Dorsolateral prefrontal cortex (tissue), 120 donors: ENCODE measurements at regions of chr5 and their contacts with region 1.

Region 1: GRCh38 chr5:138128334-138128733 is 10.9 kb downstream of the NME5 start:
- DNase-seq: no peak
- H3K4me3 ChIP-seq: no peak overlapping the region
- H3K27ac ChIP-seq: no peak overlapping the region
- H3K27me3 ChIP-seq: no peaks in the 10 kb centered on the region
- CTCF ChIP-seq: no peak

Region 2: DNA sequence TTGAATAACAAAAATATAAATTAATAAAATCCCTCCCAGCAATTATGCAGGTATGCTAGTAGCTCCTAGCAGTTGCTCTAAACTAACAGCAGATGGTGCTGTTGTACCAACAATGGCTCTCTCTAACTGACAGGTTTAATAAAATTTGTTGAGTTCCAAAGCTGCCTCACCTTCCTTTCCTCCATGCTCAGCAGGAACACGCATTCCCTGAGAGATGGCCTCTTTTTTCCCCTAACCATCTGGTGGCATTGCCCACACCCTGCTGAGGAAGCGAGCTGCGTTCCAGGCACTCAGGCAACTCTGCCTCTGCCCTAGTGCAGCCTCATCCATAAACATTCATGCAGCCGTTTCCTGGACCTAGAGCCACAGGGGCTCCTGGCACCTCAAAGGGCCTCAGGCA is 498.7 kb before region 1 on chr5:
- intact Hi-C with region 1: loop called (anchors 5 to 10 kb)
- DNase-seq: peak in 3 of 10 donors; percentile 27 to 87 (median 47)
- H3K4me3 ChIP-seq: peak overlapping the region in 8 of 59 donors; percentile 0 to 36 (median 25)
- H3K27ac ChIP-seq: peak overlapping the region in 51 of 59 donors; percentile 0 to 90 (median 56)
- H3K27me3 ChIP-seq: no peaks in the 10 kb centered on the region
- CTCF ChIP-seq: peak; percentile 87 to 99 (median 93)

Region 3: GRCh38 chr5:137754126-137754960 is 374.0 kb before region 1 on chr5 and contains the start of gene HNRNPA0:
- intact Hi-C with region 1: loop called in 1 of 2 experiments (anchors 5 kb)
- DNase-seq: peak; percentile 96 to 98 (median 98)
- H3K4me3 ChIP-seq: peak within 1 kb of the TSS; percentile 67 to 96 (median 89)
- H3K27ac ChIP-seq: peak within 1 kb of the TSS; percentile 84 to 100 (median 99)
- H3K27me3 ChIP-seq: no peaks in the 10 kb centered on the region
- CTCF ChIP-seq: peak in 36 of 56 donors; percentile 6 to 46 (median 22)
- total RNA-seq, gene HNRNPA0: 18.9 to 34.2 (median 26.7) TPM

Region 4: DNA sequence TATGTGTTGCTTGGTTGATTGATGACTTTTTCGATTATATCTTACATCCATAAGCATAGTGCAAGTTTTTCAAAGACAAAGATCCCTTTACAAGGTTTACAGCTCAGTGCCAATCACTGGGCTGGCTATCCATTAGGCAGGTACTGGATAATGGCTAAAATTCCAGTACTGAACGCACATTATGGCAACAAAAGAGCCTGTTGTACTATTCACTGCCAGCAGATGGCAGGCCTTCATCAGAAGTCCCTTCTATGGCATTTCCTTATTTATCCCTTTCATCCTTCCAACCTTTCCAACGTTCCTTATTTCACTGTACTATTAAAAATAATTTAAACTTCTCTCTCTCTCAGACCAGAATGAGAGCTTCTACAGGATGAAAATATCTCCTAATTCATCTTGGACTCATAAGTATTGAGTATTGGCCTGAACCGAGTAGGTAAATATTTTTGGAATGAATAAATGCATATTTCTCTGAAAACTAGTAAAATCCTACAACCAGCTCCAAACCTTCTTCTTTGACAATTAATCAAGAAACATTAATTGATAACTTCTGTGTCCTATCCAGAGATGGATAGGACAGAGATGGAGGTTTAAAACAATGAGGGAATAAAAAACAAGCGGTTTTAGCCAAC is 51.2 kb before region 1 on chr5:
- intact Hi-C with region 1: loop called (anchors 5 kb)
- DNase-seq: peak in 9 of 10 donors; percentile 30 to 81 (median 59)
- H3K4me3 ChIP-seq: no peak overlapping the region
- H3K27ac ChIP-seq: peak overlapping the region in 3 of 59 donors; percentile 1 to 9 (median 1)
- H3K27me3 ChIP-seq: no peaks in the 10 kb centered on the region
- CTCF ChIP-seq: peak; percentile 71 to 97 (median 90)